Posterior cingulate gyrus (tissue), 11 donors: ENCODE measurements at regions of chr17 and their contacts with region 1.

Region 1: DNA sequence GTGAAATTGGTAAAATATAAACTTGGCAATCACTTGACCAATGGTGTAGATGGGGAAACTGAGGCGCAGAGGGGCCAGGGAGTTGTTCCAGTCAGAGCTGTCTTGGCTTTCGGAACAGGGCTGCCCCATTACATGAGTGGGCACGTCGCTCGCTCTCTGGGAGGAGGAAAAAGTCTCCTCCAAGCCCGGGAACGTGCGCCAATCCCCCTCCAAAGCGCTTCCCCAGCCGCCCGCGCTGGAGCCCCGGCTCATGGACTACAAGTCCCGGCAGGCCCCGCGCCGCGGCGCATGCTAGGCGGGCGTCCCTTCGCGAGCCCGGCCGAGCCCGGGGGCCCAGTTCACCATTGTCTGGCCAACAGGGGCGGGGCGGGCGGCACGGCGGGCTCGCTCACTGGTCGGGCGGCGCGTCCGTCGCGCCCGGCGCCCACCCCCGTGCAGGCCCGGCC is 291 bp upstream of the LLGL1 start:
- DNase-seq: peak; percentile 90 to 100 (median 96)

Region 2: DNA sequence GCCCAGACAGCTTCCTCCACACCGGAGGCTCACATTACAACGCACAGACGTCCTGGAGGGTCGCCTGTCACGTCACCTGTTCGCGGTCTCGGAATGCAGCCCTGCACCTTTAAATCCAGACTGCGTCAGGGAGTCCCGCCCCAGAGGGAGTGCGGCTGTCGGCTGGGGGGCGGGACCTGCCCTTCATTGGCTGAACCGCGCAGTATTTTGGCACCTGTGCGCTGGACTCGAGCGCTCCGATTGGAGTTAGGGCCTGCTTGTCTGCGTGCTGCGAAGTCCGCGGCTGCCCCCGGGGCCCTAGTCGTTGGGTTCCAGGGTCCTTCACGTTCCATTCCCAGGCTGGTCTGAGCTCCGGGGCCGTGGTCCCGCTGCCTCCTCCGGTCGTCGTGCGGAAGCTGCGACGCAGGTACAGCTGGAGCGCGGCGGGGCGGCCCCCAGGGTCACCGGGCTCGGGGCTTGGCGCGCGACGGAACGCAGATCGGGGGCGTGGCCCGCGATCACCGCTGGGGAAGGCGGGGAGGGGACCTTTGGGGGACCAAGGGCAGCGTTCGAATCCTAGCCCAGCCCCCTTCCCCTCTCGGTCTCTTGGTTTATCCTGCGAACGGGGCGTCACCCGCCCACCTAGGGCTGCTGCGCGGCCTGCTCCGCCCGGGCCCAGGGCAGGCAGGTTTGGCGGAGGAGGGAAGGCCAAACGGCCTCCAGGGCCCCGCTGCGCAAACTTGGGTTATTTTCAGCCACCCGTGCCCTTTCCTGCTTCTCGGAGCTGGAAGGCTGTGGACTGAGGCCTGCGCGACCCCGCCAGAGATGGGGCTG is 35.4 kb after region 1 on chr17 and contains the start of gene MIEF2:
- intact Hi-C with region 1: loop called (anchors 5 kb)
- DNase-seq: peak; percentile 93 to 100 (median 96)

Region 3: GRCh38 chr17:18326039-18326438 is 100.9 kb after region 1 on chr17:
- intact Hi-C with region 1: no loop called
- DNase-seq: peak in 1 of 10 donors; percentile 2